OCI-LY7 (cell line): ENCODE measurements at regions of chr16 and their contacts with region 1.

Region 1: DNA sequence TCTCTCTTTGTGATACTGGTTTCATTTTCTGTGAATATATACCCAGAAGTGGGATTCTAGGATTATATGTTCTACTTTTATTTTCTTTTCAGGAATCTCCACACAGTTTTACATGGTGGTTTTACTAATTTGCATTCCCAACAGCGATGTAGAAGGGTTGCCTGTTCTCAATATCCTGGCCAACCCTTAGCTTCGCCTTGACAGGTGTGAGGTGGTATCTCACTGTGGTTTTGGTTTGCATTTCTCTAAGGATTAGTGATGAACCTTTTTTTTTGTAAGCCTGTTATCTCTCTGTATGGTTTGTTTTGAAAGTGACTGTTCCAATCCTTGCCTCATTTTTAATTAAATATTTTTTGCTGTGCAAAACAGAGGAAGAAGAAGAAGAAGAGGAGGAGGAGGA is 937.7 kb downstream of the CDH8 start:
- DNase-seq: no peak
- H3K4me3 ChIP-seq: no peak overlapping the region
- H3K27ac ChIP-seq: no peak overlapping the region
- H3K4me1 ChIP-seq: no peaks in the 10 kb centered on the region
- CTCF ChIP-seq: no peak

Region 2: GRCh38 chr16:59527206-59527997 is 1571.1 kb before region 1 on chr16:
- CTCF ChIA-PET with region 1: no interaction called
- POLR2A ChIA-PET with region 1: interaction called, 10 read pairs
- intact Hi-C with region 1: no loop called
- DNase-seq: no peak
- H3K4me3 ChIP-seq: no peak overlapping the region
- H3K27ac ChIP-seq: no peak overlapping the region
- H3K4me1 ChIP-seq: no peaks in the 10 kb centered on the region
- CTCF ChIP-seq: no peak

Region 3: DNA sequence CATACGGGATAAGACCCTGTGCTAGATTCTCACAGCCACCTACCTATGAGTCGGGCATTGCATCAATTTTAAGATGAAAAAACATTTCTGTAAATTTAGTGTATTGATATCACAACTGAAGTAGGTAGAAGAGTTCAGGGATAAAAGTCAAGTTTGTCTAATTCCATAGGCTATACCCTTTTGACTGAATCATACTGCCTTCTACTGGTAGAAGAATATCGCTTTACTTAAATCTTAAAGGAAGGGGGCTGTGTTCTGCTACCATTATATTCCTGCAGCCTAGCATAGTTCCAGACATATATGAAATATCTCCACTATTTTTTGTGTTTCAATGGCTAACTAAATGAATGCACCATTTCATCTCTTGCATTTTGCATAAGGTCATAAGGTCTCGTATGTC is 190.9 kb before region 1 on chr16:
- CTCF ChIA-PET with region 1: no interaction called
- POLR2A ChIA-PET with region 1: no interaction called
- intact Hi-C with region 1: no loop called
- DNase-seq: no peak
- H3K4me3 ChIP-seq: no peak overlapping the region
- H3K27ac ChIP-seq: no peak overlapping the region
- H3K4me1 ChIP-seq: no peaks in the 10 kb centered on the region
- CTCF ChIP-seq: no peak; the same call in 1 of the 2 replicates